CD8-positive, alpha-beta T cell (primary cell): ENCODE measurements at regions of chrX and their contacts with region 1.

Region 1: DNA sequence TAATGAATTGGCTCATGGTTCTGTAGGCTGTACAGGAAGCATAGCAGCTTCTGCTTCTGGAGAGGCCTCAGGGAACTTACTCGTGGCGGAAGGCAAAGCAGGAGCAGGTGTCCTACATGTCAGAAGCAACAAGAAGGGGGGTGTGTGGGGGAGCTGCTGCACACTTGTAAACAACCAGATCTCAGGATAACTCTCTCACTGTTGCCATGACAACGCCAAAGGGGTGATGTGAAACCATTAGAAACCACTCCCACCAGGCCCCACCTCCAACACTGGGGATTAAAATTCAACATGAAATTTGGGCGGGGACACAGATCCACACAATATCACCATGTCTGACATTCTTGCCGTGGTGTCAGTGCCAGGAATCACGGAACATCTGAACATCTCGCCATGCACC is 401.7 kb upstream of the SPANXN4 start:
- DNase-seq: no peak
- ATAC-seq: no peak
- H3K4me3 ChIP-seq: no peak overlapping the region
- H3K4me3 Mint-ChIP-seq: no peak overlapping the region
- H3K27ac ChIP-seq: no peak overlapping the region
- H3K27ac Mint-ChIP-seq: no peak overlapping the region
- H3K4me1 ChIP-seq: no peaks in the 10 kb centered on the region
- H3K4me1 Mint-ChIP-seq: no peaks in the 10 kb centered on the region
- H3K27me3 ChIP-seq: no peaks in the 10 kb centered on the region
- H3K27me3 Mint-ChIP-seq: no peaks in the 10 kb centered on the region
- CTCF ChIP-seq: no peak

Region 2: GRCh38 chrX:142428916-142429315 is 195.1 kb before region 1 on chrX:
- CTCF ChIA-PET with region 1: no interaction called
- POLR2A ChIA-PET with region 1: no interaction called
- intact Hi-C with region 1: loop called in 1 of 2 experiments (anchors 5 kb)
- DNase-seq: no peak
- ATAC-seq: no peak
- H3K4me3 ChIP-seq: no peak overlapping the region
- H3K4me3 Mint-ChIP-seq: no peak overlapping the region
- H3K27ac ChIP-seq: no peak overlapping the region
- H3K27ac Mint-ChIP-seq: no peak overlapping the region
- H3K4me1 ChIP-seq: no peaks in the 10 kb centered on the region
- H3K4me1 Mint-ChIP-seq: no peaks in the 10 kb centered on the region
- H3K27me3 ChIP-seq: no peaks in the 10 kb centered on the region
- H3K27me3 Mint-ChIP-seq: no peaks in the 10 kb centered on the region
- CTCF ChIP-seq: no peak